H1 (cell line): ENCODE measurements at regions of chr7 and their contacts with region 1.

Region 1: GRCh38 chr7:134695321-134695860 is 48.7 kb downstream of the BPGM start:
- DNase-seq: no peak
- H3K4me3 ChIP-seq: no peak overlapping the region
- H3K27ac ChIP-seq: no peak overlapping the region
- H3K4me1 ChIP-seq: peaks cover 0 to 4% (median 3%) of the 10 kb centered on the region in 4 experiments; a peak in 2 of 7 replicates
- H3K27me3 ChIP-seq: no peaks in the 10 kb centered on the region
- CTCF ChIP-seq: no peak
- EP300 ChIP-seq: no peak
- POLR2A ChIP-seq: no peak
- RAD21 ChIP-seq: no peak

Region 2: GRCh38 chr7:134707663-134708378 is 12.4 kb after region 1 on chr7:
- CTCF ChIA-PET with region 1: interaction called, 28 read pairs
- POLR2A ChIA-PET with region 1: interaction called, 4 read pairs
- DNase-seq: no peak
- H3K4me3 ChIP-seq: no peak overlapping the region
- H3K27ac ChIP-seq: no peak overlapping the region
- H3K4me1 ChIP-seq: peaks cover 0 to 5% (median 1%) of the 10 kb centered on the region in 4 experiments; a peak in 3 of 7 replicates
- H3K27me3 ChIP-seq: peaks cover 0 to 1% (median 0%) of the 10 kb centered on the region in 4 experiments; a peak in 1 of 7 replicates
- CTCF ChIP-seq: no peak
- EP300 ChIP-seq: no peak
- POLR2A ChIP-seq: no peak
- RAD21 ChIP-seq: no peak